Right cardiac atrium (tissue), 5 donors: ENCODE measurements at regions of chr10 and their contacts with region 1.

Region 1: DNA sequence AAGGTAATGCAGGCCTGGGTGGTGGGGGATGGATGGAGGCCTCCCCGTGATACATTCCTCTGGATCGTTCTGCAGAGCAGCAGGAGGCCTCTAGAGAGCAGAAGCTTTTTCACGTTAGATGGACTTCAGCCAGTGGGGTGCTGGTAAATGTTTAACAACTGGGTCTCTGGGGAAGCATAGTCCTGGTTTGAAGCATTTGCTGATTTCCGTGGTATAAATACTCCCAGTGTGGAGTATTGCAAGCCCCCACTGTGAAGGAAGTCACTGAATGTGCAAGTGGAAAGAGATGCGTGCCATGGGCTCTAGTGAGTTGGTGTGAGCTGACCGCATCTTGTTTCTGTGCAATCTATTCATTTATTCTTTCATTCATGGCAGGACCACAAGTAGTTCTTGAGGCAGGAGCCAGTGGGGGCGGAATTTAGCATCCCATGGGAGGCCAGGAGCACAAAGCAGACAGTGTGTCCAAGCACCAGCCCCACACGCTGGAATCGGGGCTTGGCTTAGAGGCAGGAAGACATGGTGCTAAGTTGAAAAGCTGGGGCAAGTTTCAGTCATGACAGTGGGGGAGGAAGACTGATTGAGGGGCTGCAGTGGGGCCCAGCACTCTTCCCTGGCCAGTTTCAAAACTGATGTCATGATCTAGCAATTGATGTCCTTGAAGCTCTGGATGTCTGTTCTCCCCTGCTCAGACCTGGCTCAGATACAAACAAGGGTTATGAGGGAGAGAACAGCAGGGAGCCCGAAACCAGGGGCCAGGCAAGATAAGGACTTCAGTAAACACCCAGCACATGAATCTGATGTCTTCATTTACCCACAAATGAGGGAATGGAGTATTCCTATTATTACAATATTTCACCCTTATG is 280.9 kb upstream of the LYZL1 start:
- DNase-seq: peak; percentile 77 to 83 (median 79)
- ATAC-seq: peak; percentile 77 to 91
- H3K4me3 ChIP-seq: no peak overlapping the region
- H3K27ac ChIP-seq: no peak overlapping the region
- H3K4me1 ChIP-seq: no peaks in the 10 kb centered on the region
- H3K27me3 ChIP-seq: no peaks in the 10 kb centered on the region

Region 2: DNA sequence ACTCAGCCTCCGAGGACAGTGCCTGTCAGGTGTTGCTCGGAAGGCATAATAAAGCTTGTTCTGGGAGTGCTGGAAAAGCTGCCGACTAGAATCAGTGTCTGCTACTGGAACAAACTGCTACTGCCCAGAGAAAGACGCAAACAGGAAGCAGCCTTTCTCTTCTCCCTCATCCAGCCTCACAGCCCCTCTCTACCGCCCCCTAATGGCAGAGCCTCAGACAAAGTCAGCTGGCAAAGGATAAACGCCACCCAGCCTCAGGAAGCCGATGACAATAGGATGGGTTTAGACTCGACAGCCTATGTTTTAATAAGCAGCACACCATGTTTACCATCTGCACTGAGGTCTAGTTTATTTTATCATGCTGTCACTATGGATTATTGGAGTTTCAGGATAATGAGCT is 111.4 kb after region 1 on chr10:
- intact Hi-C with region 1: loop called in 2 of 4 experiments (anchors 10 kb)
- DNase-seq: peak; percentile 53 to 78 (median 74)
- ATAC-seq: peak; percentile 41 to 56
- H3K4me3 ChIP-seq: no peak overlapping the region
- H3K27ac ChIP-seq: no peak overlapping the region
- H3K4me1 ChIP-seq: no peaks in the 10 kb centered on the region
- H3K27me3 ChIP-seq: no peaks in the 10 kb centered on the region

Region 3: DNA sequence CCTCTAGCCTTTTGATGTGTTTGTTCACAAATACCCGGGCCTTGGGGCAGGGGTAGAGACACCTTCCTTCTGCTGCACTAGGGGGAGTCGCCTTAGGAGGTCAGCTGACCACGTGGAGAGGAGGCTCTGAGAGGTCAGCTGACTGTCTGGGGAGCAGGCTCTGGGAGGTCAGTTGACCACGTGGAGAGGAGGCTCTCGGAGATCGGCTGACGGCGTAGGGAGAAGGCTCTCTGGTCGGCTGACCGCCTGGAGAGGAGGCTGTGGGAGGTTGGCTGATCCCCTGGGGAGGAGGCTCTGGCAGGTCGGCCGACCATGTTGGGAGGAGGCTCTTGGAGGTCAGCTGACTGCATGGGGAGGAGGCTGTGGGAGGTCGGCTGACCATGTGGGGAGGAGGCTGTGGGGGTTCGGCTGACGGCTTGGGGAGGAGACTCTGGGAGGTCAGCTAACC is 221.3 kb after region 1 on chr10:
- intact Hi-C with region 1: no loop called
- DNase-seq: peak in 1 of 3 donors; percentile 53
- ATAC-seq: peak in 1 of 2 donors; percentile 22
- H3K4me3 ChIP-seq: no peak overlapping the region
- H3K27ac ChIP-seq: no peak overlapping the region
- H3K4me1 ChIP-seq: no peaks in the 10 kb centered on the region
- H3K27me3 ChIP-seq: no peaks in the 10 kb centered on the region